Cardiac septum (tissue), 1 donor: ENCODE measurements at regions of chr2 and their contacts with region 1.

Region 1: DNA sequence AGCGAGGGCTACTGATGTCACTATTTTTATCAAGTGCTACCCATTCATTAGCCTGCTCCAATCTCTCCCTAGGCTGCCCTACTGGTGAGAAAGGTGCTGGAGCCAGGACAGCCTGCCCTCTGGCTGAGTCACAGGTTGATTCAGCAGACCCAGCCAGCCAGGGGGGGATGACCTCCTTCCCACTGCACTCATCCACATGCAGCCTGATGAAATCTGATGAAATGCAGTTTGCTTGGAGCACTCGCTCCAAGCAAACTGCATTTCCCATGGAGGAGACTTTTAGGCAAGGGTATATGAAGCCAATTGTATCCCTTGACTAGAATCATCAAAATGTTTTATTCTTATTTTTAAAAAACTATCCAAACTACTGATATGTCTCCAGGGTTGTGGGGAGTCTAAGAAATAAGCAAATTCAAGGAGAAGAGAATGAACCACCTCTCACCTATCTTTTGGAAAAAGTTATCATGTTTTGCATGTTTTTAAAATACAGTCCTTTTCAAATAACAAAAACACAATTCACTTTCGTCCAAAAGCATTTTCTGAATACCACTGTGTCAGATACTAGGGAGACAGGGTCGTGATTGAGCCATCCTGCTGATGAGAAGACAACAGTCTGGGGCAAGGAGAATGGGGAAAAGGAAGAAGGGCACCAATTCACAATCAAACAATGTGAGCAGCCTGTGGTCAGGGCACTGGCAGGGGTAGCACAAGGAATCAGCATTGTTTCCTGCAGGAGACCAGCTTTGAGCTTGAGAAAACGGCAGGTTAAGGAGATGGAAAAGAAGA is 128.3 kb downstream of the AFF3 start:
- DNase-seq: peak; percentile 79

Region 2: DNA sequence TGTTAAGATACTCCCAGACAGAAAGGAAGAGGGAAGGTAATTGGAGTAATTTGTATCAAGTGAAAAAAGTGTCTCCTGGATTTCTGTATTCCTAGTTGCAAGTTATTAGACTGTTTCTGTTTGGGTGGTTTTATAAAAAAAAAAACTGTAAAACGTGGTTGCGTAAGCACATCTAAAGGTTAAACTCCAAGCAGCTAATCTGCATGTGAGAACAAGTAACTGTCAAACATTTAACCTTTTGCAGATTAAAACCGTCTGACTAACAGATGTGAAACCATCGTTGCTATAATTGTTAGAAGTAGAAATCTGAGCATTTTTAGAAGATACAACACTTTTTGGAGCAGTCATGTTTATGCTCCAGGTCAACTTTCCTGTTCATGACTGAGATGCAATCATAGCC is 56.0 kb after region 1 on chr2:
- intact Hi-C with region 1: loop called (anchors 5 kb)
- DNase-seq: no peak

Region 3: DNA sequence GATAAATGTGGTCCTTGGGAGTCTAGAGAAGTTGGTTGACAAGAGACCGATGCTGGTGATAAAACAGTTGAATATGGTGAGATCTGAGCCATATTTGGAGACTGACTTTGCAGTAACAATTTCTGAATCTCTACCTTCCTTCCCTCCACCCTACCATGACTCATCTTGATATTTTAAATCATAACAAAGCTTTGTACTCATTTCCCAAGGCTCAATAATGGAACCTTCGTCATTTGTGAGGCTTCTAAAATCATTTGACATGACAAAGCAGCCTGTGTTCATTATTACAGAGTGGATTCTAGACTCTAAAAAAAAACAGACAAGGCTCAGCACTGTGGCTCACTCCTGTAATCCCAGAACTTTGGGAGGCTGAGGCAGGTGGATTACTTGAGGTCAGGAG is 510.2 kb after region 1 on chr2:
- intact Hi-C with region 1: no loop called
- DNase-seq: no peak